Calu3 (cell line): ENCODE measurements at regions of chr10 and their contacts with region 1.

Region 1: DNA sequence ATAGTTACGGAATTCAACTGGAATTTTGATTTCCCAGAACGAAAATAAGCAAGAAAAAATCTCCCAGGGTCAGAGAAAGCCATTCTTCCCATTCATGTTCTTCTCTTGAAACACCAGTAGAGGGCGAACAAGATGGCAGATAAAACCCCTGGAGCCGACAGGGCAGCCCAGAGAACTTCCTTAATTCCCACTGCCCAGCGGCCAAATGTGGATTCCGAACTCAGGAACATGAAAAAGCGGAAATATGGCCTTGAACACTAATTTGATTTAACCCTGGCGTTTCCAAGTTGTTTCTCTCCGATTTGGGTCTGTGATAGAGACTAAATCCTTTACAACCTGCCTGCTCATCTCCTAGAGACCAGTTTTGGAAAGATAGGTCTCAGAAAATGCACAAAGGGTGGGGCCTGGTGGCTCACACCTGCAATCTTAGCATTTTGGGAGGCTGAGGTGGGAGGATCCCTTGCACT is 100.7 kb upstream of the WAC start:
- DNase-seq: peak; percentile 63
- H3K4me3 Mint-ChIP-seq: no peak overlapping the region
- H3K27ac Mint-ChIP-seq: no peak overlapping the region
- H3K4me1 Mint-ChIP-seq: no peaks in the 10 kb centered on the region
- H3K27me3 Mint-ChIP-seq: peaks cover 26% of the 10 kb centered on the region
- CTCF ChIP-seq: peak; percentile 65

Region 2: GRCh38 chr10:28263136-28263820 is 169.0 kb before region 1 on chr10:
- CTCF ChIA-PET with region 1: no interaction called
- intact Hi-C with region 1: no loop called
- DNase-seq: no peak
- H3K4me3 Mint-ChIP-seq: no peak overlapping the region
- H3K27ac Mint-ChIP-seq: no peak overlapping the region
- H3K4me1 Mint-ChIP-seq: no peaks in the 10 kb centered on the region
- H3K27me3 Mint-ChIP-seq: no peaks in the 10 kb centered on the region
- CTCF ChIP-seq: no peak

Region 3: DNA sequence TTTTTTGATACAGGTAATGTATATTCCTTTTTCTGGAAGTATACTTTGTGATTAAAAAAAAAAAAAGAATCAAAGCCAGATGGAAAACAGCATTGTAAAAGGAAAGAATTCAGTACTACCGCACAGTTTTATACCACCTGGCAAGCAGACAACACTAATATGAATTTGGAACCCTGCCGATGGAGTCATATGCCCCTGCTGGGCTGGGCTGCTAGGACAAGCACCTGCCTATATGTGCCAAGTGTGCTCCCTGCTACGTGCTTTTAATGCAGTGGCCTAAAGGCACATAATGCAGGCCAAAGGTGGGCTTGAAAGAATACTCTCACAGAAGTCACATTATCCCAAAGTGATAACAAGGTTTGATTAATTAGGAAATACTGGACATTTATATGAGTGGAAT is 70.9 kb after region 1 on chr10:
- CTCF ChIA-PET with region 1: no interaction called
- intact Hi-C with region 1: loop called (anchors 10 kb)
- DNase-seq: peak; percentile 16
- H3K4me3 Mint-ChIP-seq: no peak overlapping the region
- H3K27ac Mint-ChIP-seq: no peak overlapping the region
- H3K4me1 Mint-ChIP-seq: peaks cover 8% of the 10 kb centered on the region
- H3K27me3 Mint-ChIP-seq: no peaks in the 10 kb centered on the region
- CTCF ChIP-seq: no peak

Region 4: DNA sequence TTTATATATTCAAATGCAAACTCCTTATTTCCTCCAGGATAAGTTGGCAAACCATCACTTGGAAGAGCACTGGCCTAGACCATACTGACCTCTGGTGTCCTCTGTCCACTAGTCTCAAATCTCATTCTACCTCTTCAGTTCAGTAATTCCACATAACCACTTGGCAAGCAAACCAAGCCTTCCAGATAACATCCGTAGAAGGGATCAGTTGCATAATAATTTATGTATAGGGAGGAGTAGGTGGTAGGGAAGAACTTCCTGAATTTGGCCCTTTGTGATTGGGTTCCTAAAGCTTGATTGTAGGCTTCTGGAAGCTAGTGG is 155.7 kb after region 1 on chr10:
- CTCF ChIA-PET with region 1: no interaction called
- intact Hi-C with region 1: loop called (anchors 5 kb)
- DNase-seq: no peak
- H3K4me3 Mint-ChIP-seq: no peak overlapping the region
- H3K27ac Mint-ChIP-seq: no peak overlapping the region
- H3K4me1 Mint-ChIP-seq: peaks cover 37% of the 10 kb centered on the region
- H3K27me3 Mint-ChIP-seq: no peaks in the 10 kb centered on the region
- CTCF ChIP-seq: no peak

Region 5: GRCh38 chr10:28631896-28632596 is 199.8 kb after region 1 on chr10:
- CTCF ChIA-PET with region 1: no interaction called
- intact Hi-C with region 1: no loop called
- DNase-seq: no peak
- H3K4me3 Mint-ChIP-seq: no peak overlapping the region
- H3K27ac Mint-ChIP-seq: no peak overlapping the region
- H3K4me1 Mint-ChIP-seq: peaks cover 31% of the 10 kb centered on the region
- H3K27me3 Mint-ChIP-seq: no peaks in the 10 kb centered on the region
- CTCF ChIP-seq: no peak

Region 6: GRCh38 chr10:28754930-28755718 is 322.9 kb after region 1 on chr10:
- CTCF ChIA-PET with region 1: no interaction called
- intact Hi-C with region 1: no loop called
- DNase-seq: no peak
- H3K4me3 Mint-ChIP-seq: no peak overlapping the region
- H3K27ac Mint-ChIP-seq: peak overlapping the region; percentile 1
- H3K4me1 Mint-ChIP-seq: peaks cover 13% of the 10 kb centered on the region
- H3K27me3 Mint-ChIP-seq: no peaks in the 10 kb centered on the region
- CTCF ChIP-seq: no peak